Endothelial cell of umbilical vein (primary cell): ENCODE measurements at regions of chr4 and their contacts with region 1.

Region 1: GRCh38 chr4:184649026-184649970 is at the starts of genes CASP3 and PRIMPOL:
- DNase-seq: peak; percentile 97
- H3K4me3 ChIP-seq: peak within 1 kb of the TSS; percentile 49 to 89 (median 78)
- H3K27ac ChIP-seq: peak within 1 kb of the TSS; percentile 96
- H3K4me1 ChIP-seq: peaks cover 44% of the 10 kb centered on the region
- H3K27me3 ChIP-seq: no peaks in the 10 kb centered on the region
- CTCF ChIP-seq: peak in 1 of 2 donors; percentile 37
- POLR2A ChIP-seq: peak; percentile 87
- total RNA-seq, gene CASP3: 54.5 and 66.1 TPM in 2 replicates
- total RNA-seq, gene PRIMPOL: 11.1 and 13.6 TPM in 2 replicates

Region 2: GRCh38 chr4:184575306-184575705 is 74.0 kb before region 1 on chr4:
- CTCF ChIA-PET with region 1: interaction called, 7 read pairs
- POLR2A ChIA-PET with region 1: interaction called, 5 read pairs
- dilution Hi-C with region 1: no loop called
- intact Hi-C with region 1: loop called (anchors 1 kb)
- DNase-seq: peak; percentile 13
- H3K4me3 ChIP-seq: peak overlapping the region in 1 of 3 experiments; percentile 47
- H3K27ac ChIP-seq: peak overlapping the region; percentile 73
- H3K4me1 ChIP-seq: peaks cover 20% of the 10 kb centered on the region
- H3K27me3 ChIP-seq: no peaks in the 10 kb centered on the region
- CTCF ChIP-seq: no peak
- POLR2A ChIP-seq: no peak

Region 3: DNA sequence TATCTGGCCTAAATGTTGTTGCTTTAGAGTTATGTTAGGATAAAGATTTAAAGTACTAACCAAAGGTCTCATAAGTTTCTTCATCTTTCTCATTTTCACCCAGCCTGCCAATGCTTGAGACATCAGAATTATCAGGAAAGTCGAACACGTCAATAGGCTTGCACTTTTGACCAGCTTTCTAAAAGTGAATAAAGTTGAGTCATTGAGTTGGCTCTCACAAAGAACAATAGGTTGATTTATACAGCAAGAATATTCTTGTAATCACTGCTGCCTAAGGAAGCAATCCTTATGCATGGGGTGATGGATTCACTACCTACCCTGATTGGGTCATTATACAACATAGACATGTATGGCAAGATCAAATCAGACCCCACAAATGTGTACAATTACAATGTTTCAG is 79.6 kb after region 1 on chr4:
- CTCF ChIA-PET with region 1: interaction called, 30 read pairs
- POLR2A ChIA-PET with region 1: interaction called, 17 read pairs
- dilution Hi-C with region 1: no loop called
- intact Hi-C with region 1: loop called (anchors 1 kb)
- DNase-seq: peak; percentile 84
- H3K4me3 ChIP-seq: no peak overlapping the region
- H3K27ac ChIP-seq: peak overlapping the region; percentile 68
- H3K4me1 ChIP-seq: peaks cover 24% of the 10 kb centered on the region
- H3K27me3 ChIP-seq: no peaks in the 10 kb centered on the region
- CTCF ChIP-seq: no peak
- POLR2A ChIP-seq: no peak

Region 4: GRCh38 chr4:184825896-184826690 is 176.8 kb after region 1 on chr4 and contains the start of gene ACSL1:
- CTCF ChIA-PET with region 1: no interaction called
- POLR2A ChIA-PET with region 1: no interaction called
- dilution Hi-C with region 1: no loop called
- intact Hi-C with region 1: loop called (anchors 1 kb)
- DNase-seq: peak; percentile 48
- H3K4me3 ChIP-seq: peak within 1 kb of the TSS; percentile 43 to 62 (median 51)
- H3K27ac ChIP-seq: peak within 1 kb of the TSS; percentile 40
- H3K4me1 ChIP-seq: peaks cover 13% of the 10 kb centered on the region
- H3K27me3 ChIP-seq: peaks cover 0 to 2% of the 10 kb centered on the region in 2 experiments
- CTCF ChIP-seq: no peak
- POLR2A ChIP-seq: no peak
- total RNA-seq, gene ACSL1: 17.7 and 18.9 TPM in 2 replicates

Region 5: GRCh38 chr4:184838249-184839074 is 189.2 kb after region 1 on chr4:
- CTCF ChIA-PET with region 1: no interaction called
- POLR2A ChIA-PET with region 1: no interaction called
- dilution Hi-C with region 1: no loop called
- intact Hi-C with region 1: no loop called
- DNase-seq: no peak
- H3K4me3 ChIP-seq: no peak overlapping the region
- H3K27ac ChIP-seq: no peak overlapping the region
- H3K4me1 ChIP-seq: no peaks in the 10 kb centered on the region
- H3K27me3 ChIP-seq: peaks cover 3 to 13% of the 10 kb centered on the region in 2 experiments
- CTCF ChIP-seq: no peak
- POLR2A ChIP-seq: no peak

Region 6: GRCh38 chr4:185142912-185143595 is 493.8 kb after region 1 on chr4 and contains the start of gene SLC25A4:
- CTCF ChIA-PET with region 1: no interaction called
- POLR2A ChIA-PET with region 1: no interaction called
- dilution Hi-C with region 1: no loop called
- intact Hi-C with region 1: loop called (anchors 10 kb)
- DNase-seq: peak; percentile 77
- H3K4me3 ChIP-seq: peak within 1 kb of the TSS; percentile 52 to 75 (median 69)
- H3K27ac ChIP-seq: no peak within 1 kb of the TSS
- H3K4me1 ChIP-seq: peaks cover 12% of the 10 kb centered on the region
- H3K27me3 ChIP-seq: no peaks in the 10 kb centered on the region
- CTCF ChIP-seq: peak; percentile 43 to 62
- POLR2A ChIP-seq: peak; percentile 93
- total RNA-seq, gene SLC25A4: 13.7 and 13.9 TPM in 2 replicates